Esophagus muscularis mucosa (tissue), 4 donors: ENCODE measurements at regions of chr2 and their contacts with region 1.

Region 1: DNA sequence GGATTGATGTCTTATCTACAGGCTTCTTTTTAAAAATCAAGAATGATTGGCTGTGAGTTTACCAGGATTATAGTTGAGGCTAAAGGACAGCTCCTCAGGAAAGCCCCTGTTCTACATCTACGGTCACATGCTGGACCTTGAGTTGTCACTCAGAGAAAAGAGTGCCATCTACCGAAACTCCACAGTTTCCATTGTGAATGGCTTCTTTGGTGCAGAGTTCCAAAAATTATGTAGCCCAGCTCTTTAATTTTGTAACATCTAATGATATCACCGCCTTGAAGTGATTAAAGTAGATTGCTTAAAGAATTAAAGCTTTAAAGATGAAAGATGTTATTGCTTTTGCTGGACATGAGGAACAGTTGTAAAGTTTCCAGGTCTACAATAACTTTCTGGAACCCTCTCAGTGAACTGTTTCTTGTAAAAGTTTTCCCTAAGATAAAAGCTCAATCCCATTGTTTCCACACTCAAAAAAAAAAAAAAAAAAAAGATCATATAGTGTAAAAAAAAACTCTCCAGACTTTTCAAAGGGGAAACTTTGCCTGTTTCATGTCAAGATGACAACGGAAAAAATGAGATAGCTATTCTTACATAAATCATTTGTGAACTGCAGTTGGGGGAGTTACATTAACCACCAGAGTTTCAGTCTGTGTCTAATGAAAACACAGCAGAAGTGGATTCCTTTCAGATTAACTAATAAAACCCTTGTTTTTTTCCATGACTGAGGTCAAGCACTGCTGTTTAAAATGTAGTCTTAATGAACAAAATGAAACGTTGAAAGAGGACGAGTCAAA is 4.3 kb downstream of the COL3A1 start:
- DNase-seq: no peak
- H3K4me3 ChIP-seq: peak overlapping the region; percentile 50 to 63 (median 60)
- H3K27ac ChIP-seq: peak overlapping the region; percentile 79 to 84 (median 82)
- H3K4me1 ChIP-seq: peaks cover 0 to 62% (median 45%) of the 10 kb centered on the region in 4 donors
- H3K27me3 ChIP-seq: no peaks in the 10 kb centered on the region
- CTCF ChIP-seq: peak; percentile 32 to 51 (median 44)
- EP300 ChIP-seq: no peak
- POLR2A ChIP-seq: no peak

Region 2: GRCh38 chr2:188291617-188292347 is 686.7 kb before region 1 on chr2 and contains the start of gene GULP1:
- intact Hi-C with region 1: loop called (anchors 10 kb)
- DNase-seq: no peak
- H3K4me3 ChIP-seq: peak within 1 kb of the TSS; percentile 74 to 86 (median 76)
- H3K27ac ChIP-seq: peak within 1 kb of the TSS; percentile 94 to 96 (median 95)
- H3K4me1 ChIP-seq: peaks cover 5 to 41% (median 37%) of the 10 kb centered on the region in 4 donors
- H3K27me3 ChIP-seq: no peaks in the 10 kb centered on the region
- CTCF ChIP-seq: peak; percentile 39 to 78 (median 53)
- EP300 ChIP-seq: no peak
- POLR2A ChIP-seq: no peak
- total RNA-seq, gene GULP1: 27.1 to 49.0 (median 36.8) TPM

Region 3: DNA sequence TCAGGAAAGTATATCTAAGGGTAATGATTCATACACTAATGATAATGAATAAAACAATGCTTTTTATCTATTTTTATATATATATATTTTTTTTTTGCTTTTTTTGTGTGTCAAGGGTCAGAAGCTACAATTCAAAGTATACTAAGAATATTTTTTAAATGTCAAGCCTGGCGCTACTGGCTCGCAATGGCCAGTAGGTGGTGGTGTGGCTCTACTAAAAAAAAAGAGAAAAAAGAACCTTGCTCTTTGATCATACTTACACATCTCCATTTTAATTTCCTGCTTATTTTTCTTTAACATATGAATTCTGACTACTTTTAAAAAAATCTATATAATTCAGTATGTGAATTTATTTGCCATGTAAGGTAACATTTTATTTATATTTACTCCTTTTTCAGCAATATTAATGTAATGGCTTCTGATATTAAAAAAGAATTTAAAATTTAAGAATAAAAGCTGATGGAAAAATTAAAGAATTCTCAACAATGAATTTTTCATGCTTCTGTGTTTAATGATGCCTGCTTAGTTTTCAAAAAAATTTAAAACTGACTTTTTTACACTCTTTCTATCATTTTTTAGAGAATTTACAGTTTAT is 453.9 kb before region 1 on chr2:
- intact Hi-C with region 1: loop called (anchors 5 kb)
- DNase-seq: no peak
- H3K4me3 ChIP-seq: no peak overlapping the region
- H3K27ac ChIP-seq: no peak overlapping the region
- H3K4me1 ChIP-seq: peaks cover 1 to 42% (median 24%) of the 10 kb centered on the region in 4 donors
- H3K27me3 ChIP-seq: no peaks in the 10 kb centered on the region
- CTCF ChIP-seq: peak; percentile 81 to 85 (median 83)
- EP300 ChIP-seq: no peak
- POLR2A ChIP-seq: no peak

Region 4: GRCh38 chr2:188788621-188789020 is 189.9 kb before region 1 on chr2:
- intact Hi-C with region 1: loop called (anchors 2 kb)
- DNase-seq: no peak
- H3K4me3 ChIP-seq: peak overlapping the region in 2 of 4 donors; percentile 13 to 38
- H3K27ac ChIP-seq: peak overlapping the region; percentile 67 to 87 (median 76)
- H3K4me1 ChIP-seq: peaks cover 17 to 35% (median 33%) of the 10 kb centered on the region in 4 donors
- H3K27me3 ChIP-seq: no peaks in the 10 kb centered on the region
- CTCF ChIP-seq: no peak
- EP300 ChIP-seq: no peak
- POLR2A ChIP-seq: no peak

Region 5: GRCh38 chr2:188897096-188897495 is 81.4 kb before region 1 on chr2:
- intact Hi-C with region 1: loop called (anchors 10 kb)
- DNase-seq: no peak
- H3K4me3 ChIP-seq: peak overlapping the region in 2 of 4 donors; percentile 1 to 15
- H3K27ac ChIP-seq: peak overlapping the region; percentile 54 to 68 (median 65)
- H3K4me1 ChIP-seq: peaks cover 3 to 47% (median 36%) of the 10 kb centered on the region in 4 donors
- H3K27me3 ChIP-seq: no peaks in the 10 kb centered on the region
- CTCF ChIP-seq: no peak
- EP300 ChIP-seq: no peak
- POLR2A ChIP-seq: no peak

Region 6: GRCh38 chr2:189412330-189412953 is 434.0 kb after region 1 on chr2:
- intact Hi-C with region 1: loop called (anchors 5 kb)
- DNase-seq: no peak
- H3K4me3 ChIP-seq: no peak overlapping the region
- H3K27ac ChIP-seq: peak overlapping the region; percentile 71 to 80 (median 72)
- H3K4me1 ChIP-seq: peaks cover 0 to 43% (median 27%) of the 10 kb centered on the region in 4 donors
- H3K27me3 ChIP-seq: no peaks in the 10 kb centered on the region
- CTCF ChIP-seq: peak; percentile 76 to 80 (median 77)
- EP300 ChIP-seq: no peak
- POLR2A ChIP-seq: no peak